K562 (cell line): ENCODE measurements at regions of chr7 and their contacts with region 1.

Region 1: DNA sequence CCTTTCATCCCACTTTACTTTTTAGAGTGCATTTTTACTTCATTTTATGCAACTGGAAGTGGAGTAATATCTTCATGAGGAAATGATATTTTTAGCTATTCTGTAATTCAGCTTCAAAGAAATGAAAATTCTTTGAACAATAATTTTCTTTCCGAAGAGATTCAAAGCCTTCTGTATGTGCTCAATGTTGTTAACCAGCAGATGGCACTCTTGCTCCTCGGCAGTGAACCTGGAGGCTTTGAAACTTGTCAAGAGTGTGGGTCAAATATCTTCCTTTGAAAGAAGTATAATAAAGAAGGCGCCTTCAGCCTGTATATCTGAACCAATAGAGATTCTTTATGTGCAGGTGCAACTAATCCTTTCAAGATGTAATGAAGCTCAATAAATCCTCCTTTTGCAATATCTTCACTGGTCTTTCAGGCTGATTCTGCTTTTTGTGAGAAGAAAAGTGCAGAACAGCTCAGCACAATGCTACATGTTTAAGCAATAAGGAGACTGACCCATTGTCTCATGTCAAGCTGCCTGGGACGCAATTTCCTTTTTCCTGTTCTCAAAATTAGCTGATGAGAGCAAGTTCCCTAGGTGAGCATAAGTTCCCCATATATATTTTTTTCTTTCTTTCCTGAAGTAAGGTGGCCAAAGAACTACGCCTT is 258.4 kb downstream of the SEMA3A start:
- DNase-seq: peak; percentile 15 to 76 (median 24)
- ATAC-seq: peak; percentile 85
- H3K4me3 ChIP-seq: no peak overlapping the region
- H3K27ac ChIP-seq: no peak overlapping the region
- H3K4me1 ChIP-seq: no peaks in the 10 kb centered on the region
- H3K27me3 ChIP-seq: no peaks in the 10 kb centered on the region
- CTCF ChIP-seq: peak; percentile 73 to 82 (median 73)
- EP300 ChIP-seq: no peak
- POLR2A ChIP-seq: no peak
- RAD21 ChIP-seq: peak; percentile 89 to 90

Region 2: GRCh38 chr7:83947260-83947659 is 11.1 kb after region 1 on chr7:
- CTCF ChIA-PET with region 1: no interaction called
- POLR2A ChIA-PET with region 1: no interaction called
- in situ Hi-C with region 1: no loop called
- intact Hi-C with region 1: no loop called
- DNase-seq: peak; percentile 7 to 11 (median 8)
- ATAC-seq: peak; percentile 51; the same call in 1 of the 3 replicates
- H3K4me3 ChIP-seq: no peak overlapping the region
- H3K27ac ChIP-seq: no peak overlapping the region
- H3K4me1 ChIP-seq: no peaks in the 10 kb centered on the region
- H3K27me3 ChIP-seq: no peaks in the 10 kb centered on the region
- CTCF ChIP-seq: peak in 1 of 3 experiments; percentile 25; a peak in 1 of 6 replicates
- EP300 ChIP-seq: no peak
- POLR2A ChIP-seq: no peak
- RAD21 ChIP-seq: peak in 1 of 2 experiments; percentile 30; a peak in 2 of 4 replicates

Region 3: GRCh38 chr7:85554236-85555178 is 1618.3 kb after region 1 on chr7:
- CTCF ChIA-PET with region 1: interaction called, 4 read pairs
- POLR2A ChIA-PET with region 1: no interaction called
- in situ Hi-C with region 1: no loop called
- intact Hi-C with region 1: loop called (anchors 5 kb)
- DNase-seq: peak; percentile 16 to 44 (median 38)
- ATAC-seq: peak; percentile 45; the same call in 2 of the 3 replicates
- H3K4me3 ChIP-seq: no peak overlapping the region
- H3K27ac ChIP-seq: no peak overlapping the region
- H3K4me1 ChIP-seq: no peaks in the 10 kb centered on the region
- H3K27me3 ChIP-seq: no peaks in the 10 kb centered on the region
- CTCF ChIP-seq: peak; percentile 30 to 67 (median 67); a peak in 5 of 6 replicates
- EP300 ChIP-seq: no peak
- POLR2A ChIP-seq: no peak
- RAD21 ChIP-seq: peak; percentile 56 to 72

Region 4: GRCh38 chr7:85851571-85852193 is 1915.5 kb after region 1 on chr7:
- CTCF ChIA-PET with region 1: no interaction called
- POLR2A ChIA-PET with region 1: no interaction called
- in situ Hi-C with region 1: no loop called
- intact Hi-C with region 1: loop called (anchors 10 kb)
- DNase-seq: peak in 1 of 4 experiments; percentile 12
- ATAC-seq: no peak
- H3K4me3 ChIP-seq: no peak overlapping the region
- H3K27ac ChIP-seq: no peak overlapping the region
- H3K4me1 ChIP-seq: no peaks in the 10 kb centered on the region
- H3K27me3 ChIP-seq: no peaks in the 10 kb centered on the region
- CTCF ChIP-seq: peak in 1 of 3 experiments; percentile 34; a peak in 1 of 6 replicates
- EP300 ChIP-seq: no peak
- POLR2A ChIP-seq: no peak
- RAD21 ChIP-seq: peak; percentile 29 to 45; a peak in 3 of 4 replicates